Right ventricle myocardium superior (tissue), 1 donor: ENCODE measurements at regions of chr9 and their contacts with region 1.

Region 1: DNA sequence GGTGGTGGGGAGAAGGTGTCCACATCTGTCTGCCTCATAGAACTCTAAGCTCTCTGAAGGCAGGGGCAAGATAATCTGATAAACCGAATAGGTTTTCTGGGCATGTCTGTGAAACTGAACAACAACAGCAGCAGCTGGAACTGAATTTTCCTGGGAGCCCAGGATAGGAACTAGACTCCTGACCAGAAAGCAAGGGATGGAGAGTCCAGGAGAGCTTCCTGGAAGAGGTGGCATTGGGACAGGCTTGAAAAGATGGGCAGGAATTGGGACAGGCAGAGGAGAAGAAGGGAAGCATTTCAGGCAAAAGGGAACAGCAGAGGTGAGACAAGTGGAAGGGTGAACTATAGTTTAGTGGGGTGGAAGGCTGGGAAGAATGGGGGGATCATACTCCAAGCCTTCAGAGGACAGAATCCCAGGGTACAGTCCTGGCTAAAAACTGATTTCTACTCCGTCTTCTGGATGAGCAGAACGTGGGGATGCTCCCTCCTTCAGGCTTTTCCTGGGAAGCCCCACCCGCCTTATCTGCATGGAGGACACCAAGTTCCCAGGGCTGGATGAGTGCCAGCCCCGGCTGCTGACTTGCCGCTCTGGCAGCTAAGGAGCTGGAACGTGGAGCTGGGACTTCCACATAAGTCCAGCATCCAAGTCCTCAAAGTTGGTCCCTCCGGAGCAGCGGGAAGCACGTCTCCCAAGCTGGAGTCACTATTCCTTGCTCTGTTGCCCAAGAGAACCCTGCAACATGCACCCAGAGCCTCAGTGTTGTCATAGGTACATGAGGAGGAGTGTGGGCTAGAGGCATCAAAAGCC is 13.9 kb upstream of the KIF12 start:
- DNase-seq: peak; percentile 93
- ATAC-seq: peak; percentile 85

Region 2: GRCh38 chr9:113427629-113428028 is 685.4 kb before region 1 on chr9:
- intact Hi-C with region 1: no loop called
- DNase-seq: no peak
- ATAC-seq: no peak

Region 3: GRCh38 chr9:113875459-113876150 is 237.4 kb before region 1 on chr9:
- intact Hi-C with region 1: no loop called
- DNase-seq: no peak
- ATAC-seq: peak; percentile 13

Region 4: DNA sequence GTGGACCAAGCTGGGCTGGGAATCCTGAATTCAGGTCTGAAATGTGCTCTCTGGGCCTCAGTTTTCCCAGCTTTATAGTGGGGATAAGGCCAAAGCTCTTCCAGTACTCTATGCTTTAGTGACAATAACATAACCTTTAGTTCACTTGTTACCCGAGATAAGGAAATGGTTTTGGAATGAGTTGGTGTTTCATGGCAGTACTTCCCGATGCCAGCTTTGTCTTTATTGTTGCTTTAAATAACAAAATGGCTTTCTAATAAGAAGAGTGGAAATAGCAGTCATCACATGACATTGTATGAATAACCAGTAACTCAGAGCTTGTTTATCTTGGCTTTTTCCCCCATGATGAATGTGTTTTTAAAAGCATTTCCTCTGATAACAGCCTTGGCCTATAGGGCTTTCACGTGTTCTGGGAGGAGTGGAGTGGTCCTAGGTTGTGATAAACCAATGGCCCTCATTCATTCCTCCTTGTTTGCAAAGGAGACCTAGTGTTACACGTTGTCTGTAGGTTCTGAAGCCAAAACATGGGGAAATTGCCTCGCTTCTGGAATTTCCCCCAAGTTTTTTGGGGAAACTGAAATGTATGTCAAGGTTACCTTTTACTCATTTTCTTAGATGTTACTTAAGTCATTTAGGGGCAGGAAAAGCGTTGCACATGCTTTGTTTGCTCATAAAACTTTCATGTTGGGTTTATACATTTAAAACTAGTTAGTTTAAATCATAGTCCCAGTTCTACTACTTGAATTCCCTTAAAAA is 183.2 kb before region 1 on chr9:
- intact Hi-C with region 1: no loop called
- DNase-seq: no peak
- ATAC-seq: no peak

Region 5: DNA sequence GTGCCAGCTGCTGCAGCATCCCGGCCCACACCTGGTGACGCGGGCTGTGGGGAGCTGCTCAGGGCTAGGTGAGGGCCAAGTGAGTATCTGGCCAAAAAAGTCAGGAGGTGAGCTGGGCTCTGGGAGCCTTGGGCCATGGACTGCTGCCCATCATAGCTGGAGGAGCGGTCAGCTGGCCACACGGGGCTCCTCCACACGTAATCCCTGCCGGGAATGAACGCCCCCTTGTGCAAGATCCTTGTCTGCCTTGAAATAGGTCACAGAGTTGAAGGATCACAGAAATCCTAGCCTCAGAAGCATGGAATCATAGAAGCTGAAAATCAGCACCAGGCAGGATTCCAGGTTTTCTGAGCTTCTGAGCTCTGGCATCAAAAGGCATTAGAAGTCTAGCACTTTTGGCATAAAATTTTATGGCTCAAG is 25.6 kb after region 1 on chr9:
- intact Hi-C with region 1: no loop called
- DNase-seq: no peak
- ATAC-seq: no peak

Region 6: GRCh38 chr9:114149835-114150234 is 36.9 kb after region 1 on chr9:
- intact Hi-C with region 1: loop called (anchors 5 kb)
- DNase-seq: no peak
- ATAC-seq: peak; percentile 36

Region 7: DNA sequence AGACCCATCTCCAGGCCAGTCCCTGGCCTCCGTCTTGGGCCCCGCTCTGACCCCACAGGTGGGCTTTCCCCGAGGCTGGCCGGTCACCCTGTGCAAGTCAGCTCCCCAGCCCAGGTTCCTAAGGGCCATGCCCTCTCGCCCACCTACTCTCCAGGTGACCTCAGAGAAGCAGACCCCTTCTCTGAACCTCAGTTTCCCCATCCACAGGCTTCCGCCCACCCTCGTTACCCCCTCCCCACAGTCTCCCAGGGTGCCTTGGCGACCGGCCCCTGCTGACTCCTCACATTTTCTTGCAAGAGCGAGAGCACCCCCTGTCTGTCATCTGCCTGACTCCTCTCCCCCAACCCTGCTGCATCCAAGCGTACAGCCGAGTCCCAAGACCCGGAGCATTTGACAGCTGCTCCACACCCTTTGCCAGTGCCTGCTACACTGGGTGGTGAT is 158.7 kb after region 1 on chr9:
- intact Hi-C with region 1: loop called (anchors 5 kb)
- DNase-seq: peak; percentile 57
- ATAC-seq: peak; percentile 86